Caco-2 (cell line): ENCODE measurements at regions of chr9 and their contacts with region 1.

Region 1: DNA sequence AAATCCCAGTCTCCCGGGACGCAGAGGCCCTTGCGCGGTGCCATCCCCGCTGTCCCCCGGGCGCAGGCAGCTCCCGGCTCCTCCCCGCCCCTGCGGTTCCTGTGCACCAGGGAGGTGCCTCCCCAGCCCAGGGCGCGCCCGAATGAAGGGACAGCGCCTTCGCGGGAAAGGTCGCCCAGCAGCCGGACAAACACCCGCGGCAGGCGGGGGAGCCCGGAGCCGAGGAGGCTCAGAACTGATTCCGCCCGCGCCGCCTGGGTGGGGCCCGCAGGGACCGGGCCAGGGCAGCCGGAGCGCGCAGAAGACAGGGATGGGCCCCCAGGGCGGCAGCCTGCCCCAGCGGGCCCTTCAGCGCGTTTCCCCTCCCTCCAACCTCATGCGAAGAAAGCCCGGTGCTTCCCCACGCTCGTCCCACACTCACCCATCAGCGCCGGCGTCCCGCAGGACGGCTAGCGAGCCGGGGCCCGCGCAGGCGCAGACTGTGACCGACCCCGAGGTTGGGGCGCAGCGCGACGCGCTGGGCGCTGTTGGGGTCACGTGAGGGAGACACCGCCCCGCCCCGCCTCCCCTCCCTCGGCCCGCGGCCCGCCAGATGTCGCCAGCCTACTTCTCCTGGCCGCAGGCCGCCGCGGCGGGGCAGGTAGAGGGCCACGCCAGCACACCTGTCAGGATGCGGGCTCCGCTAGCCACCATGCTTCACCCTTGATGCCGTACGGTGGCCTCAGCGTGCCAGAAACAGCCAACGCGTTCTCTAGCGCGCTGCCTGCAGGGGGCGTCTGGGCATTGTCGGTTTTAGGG is at the start of gene SLC25A51:
- DNase-seq: peak; percentile 97
- H3K4me3 ChIP-seq: peak within 1 kb of the TSS; percentile 81
- H3K4me3 Mint-ChIP-seq: peak within 1 kb of the TSS; percentile 77
- H3K27ac Mint-ChIP-seq: peak within 1 kb of the TSS; percentile 91
- H3K4me1 ChIP-seq: peaks cover 26% of the 10 kb centered on the region
- H3K4me1 Mint-ChIP-seq: peaks cover 20% of the 10 kb centered on the region
- H3K27me3 ChIP-seq: no peaks in the 10 kb centered on the region
- H3K27me3 Mint-ChIP-seq: no peaks in the 10 kb centered on the region
- CTCF ChIP-seq: peak; percentile 88 to 96
- total RNA-seq, gene SLC25A51: 29.1 and 29.3 TPM in 2 replicates

Region 2: DNA sequence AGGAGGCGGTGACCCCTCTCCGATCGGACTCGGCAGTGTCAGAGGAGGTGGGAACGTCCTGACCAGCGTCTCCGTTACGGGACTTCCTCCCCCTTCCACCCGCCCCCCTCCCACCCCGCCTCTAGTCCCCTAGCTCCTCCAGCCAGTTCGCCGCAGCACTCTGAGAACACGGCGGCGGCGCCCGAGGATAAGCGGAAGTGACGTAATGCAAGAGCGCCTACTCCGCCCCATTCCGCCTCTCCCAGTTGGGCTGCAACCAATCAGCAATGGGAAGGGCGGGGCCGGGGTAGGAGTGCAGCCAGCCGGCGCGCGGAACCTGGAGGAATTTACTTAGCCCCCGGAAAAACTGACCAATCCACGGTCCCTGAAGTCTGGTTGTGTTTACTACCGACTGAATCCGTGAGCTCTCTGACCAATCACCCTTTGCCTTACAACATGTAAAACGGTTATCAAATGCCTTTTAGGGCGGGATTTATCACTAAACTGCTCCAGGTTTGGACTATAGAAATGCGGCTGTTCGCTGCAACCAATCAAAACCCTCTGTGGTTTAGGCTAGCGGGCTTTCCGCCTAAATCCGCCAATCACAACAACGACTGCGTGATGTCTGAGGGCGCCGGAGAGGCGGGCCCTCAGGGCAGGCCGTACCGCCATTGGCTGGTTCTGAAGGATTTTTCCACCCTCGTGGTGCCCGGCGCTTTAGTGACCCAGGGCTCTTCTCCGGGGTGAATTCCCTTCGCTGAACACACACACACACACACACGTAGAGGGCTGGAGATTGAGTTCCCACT is 438.4 kb before region 1 on chr9 and contains the start of gene ZBTB5:
- CTCF ChIA-PET with region 1: no interaction called
- POLR2A ChIA-PET with region 1: interaction called, 10 read pairs
- intact Hi-C with region 1: loop called (anchors 5 kb)
- DNase-seq: peak; percentile 99
- H3K4me3 ChIP-seq: peak within 1 kb of the TSS; percentile 89
- H3K4me3 Mint-ChIP-seq: peak within 1 kb of the TSS; percentile 95
- H3K27ac Mint-ChIP-seq: peak within 1 kb of the TSS; percentile 96
- H3K4me1 ChIP-seq: peaks cover 12% of the 10 kb centered on the region
- H3K4me1 Mint-ChIP-seq: peaks cover 21% of the 10 kb centered on the region
- H3K27me3 ChIP-seq: no peaks in the 10 kb centered on the region
- H3K27me3 Mint-ChIP-seq: no peaks in the 10 kb centered on the region
- CTCF ChIP-seq: no peak
- total RNA-seq, gene ZBTB5: 12.5 and 13.2 TPM in 2 replicates

Region 3: DNA sequence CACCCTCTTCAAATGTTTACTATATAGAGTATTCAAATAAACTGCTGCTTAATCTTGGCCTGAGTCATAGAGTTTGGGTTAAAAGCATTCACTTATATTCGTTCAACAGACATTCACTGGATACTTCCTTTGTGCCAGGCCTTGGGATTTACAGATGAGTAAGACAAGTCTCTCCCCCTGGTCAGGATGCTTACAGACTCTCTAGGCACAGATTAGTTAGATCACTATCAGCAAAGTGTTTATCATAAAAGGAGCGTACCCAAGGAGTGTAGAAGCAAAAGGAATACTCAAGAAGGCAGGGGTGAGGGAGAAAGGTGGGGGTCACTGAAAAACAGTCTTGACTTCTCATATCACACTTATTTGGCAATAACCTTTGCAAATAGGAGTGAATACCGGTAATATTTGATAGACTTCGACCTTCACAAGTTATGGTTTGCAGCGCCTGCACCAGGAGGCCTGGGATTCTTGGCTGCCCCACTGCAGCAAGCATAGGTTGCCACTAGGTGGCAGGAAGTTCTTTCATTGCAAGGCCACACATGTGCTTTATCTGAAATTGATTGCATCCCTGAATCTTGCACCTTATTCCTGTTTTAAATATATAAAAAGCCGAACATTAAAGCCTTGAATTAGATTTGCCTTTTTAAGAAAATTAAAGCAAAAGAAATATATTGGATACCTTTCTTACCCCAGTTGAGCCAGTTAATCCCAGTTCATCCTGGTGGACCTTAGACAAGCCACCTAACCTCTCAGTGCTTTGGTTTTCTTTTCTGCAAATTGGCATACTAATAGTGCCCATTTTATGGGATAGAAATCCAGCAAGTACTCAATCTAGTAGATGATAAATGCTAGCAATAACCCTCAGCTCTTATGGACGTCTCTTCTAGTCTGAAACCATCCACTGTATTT is 156.7 kb before region 1 on chr9:
- CTCF ChIA-PET with region 1: no interaction called
- POLR2A ChIA-PET with region 1: no interaction called
- intact Hi-C with region 1: loop called (anchors 10 kb)
- DNase-seq: peak; percentile 61 to 73
- H3K4me3 ChIP-seq: no peak overlapping the region
- H3K4me3 Mint-ChIP-seq: no peak overlapping the region
- H3K27ac Mint-ChIP-seq: no peak overlapping the region
- H3K4me1 ChIP-seq: no peaks in the 10 kb centered on the region
- H3K4me1 Mint-ChIP-seq: no peaks in the 10 kb centered on the region
- H3K27me3 ChIP-seq: no peaks in the 10 kb centered on the region
- H3K27me3 Mint-ChIP-seq: no peaks in the 10 kb centered on the region
- CTCF ChIP-seq: peak; percentile 85 to 90

Region 4: DNA sequence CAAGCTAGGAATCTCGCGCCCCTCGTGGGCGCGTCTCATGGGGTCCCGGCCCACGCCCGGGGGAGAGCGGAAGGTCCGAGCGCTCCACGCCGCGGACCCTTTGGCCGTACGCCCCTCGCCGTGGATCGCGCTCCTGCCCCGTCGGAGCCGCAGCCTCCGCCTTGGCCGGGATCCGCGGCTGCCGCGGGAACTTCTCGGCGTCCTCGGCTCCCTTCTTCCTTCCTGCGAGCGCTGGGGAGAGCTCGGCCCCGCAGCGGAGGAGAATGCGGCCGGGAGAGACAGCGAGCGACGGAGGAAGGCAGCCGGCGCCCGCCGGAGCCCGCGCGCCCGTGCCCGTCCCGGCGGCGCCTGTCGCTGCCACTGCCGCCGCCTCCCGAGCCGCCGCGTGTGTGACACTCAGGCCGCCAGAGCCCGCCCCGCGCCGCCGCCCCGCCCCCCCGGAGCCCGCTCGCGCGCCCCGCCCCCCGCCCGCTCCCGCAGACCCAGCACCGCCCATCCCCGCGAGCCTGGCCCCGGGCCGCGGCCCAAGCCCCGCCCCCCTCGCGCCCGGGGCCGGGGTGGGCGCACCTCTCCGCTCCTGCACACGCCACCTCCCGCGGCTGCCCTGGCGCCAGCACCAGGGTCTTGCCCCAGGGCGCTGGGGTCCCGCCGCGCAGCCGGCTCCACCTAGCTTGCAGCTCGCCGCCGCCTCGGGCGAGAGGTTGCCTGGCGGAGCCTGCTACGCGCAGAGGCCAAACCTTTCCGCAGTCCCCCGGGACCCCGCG is 165.2 kb after region 1 on chr9 and contains the start of gene SHB:
- CTCF ChIA-PET with region 1: no interaction called
- POLR2A ChIA-PET with region 1: no interaction called
- intact Hi-C with region 1: loop called (anchors 2 kb)
- DNase-seq: peak; percentile 81 to 84
- H3K4me3 ChIP-seq: peak within 1 kb of the TSS; percentile 92
- H3K4me3 Mint-ChIP-seq: peak within 1 kb of the TSS; percentile 95
- H3K27ac Mint-ChIP-seq: peak within 1 kb of the TSS; percentile 83
- H3K4me1 ChIP-seq: peaks cover 32% of the 10 kb centered on the region
- H3K4me1 Mint-ChIP-seq: peaks cover 24% of the 10 kb centered on the region
- H3K27me3 ChIP-seq: no peaks in the 10 kb centered on the region
- H3K27me3 Mint-ChIP-seq: no peaks in the 10 kb centered on the region
- CTCF ChIP-seq: no peak
- total RNA-seq, gene SHB: 18.3 and 18.4 TPM in 2 replicates

Region 5: DNA sequence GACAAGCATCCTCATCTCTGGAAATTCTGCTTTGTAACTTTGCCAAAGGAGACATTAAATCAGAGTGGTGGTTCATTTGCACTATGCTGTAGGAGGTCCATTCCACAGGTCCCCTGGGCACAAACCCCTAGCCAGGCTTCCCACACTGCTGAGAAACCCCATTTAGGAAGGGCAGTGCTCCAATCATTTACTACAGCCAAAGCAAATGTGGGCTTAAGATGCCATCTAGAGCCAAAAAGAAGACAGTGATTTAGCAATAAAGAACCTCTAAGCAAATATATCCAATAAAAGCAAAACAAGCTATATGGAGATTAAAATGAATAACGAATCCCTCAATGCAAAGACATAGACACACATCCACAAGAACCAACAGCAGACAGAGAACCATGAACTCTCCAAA is 359.7 kb after region 1 on chr9:
- CTCF ChIA-PET with region 1: no interaction called
- POLR2A ChIA-PET with region 1: no interaction called
- intact Hi-C with region 1: loop called (anchors 2 kb)
- DNase-seq: peak in 1 of 2 experiments; percentile 35
- H3K4me3 ChIP-seq: no peak overlapping the region
- H3K4me3 Mint-ChIP-seq: no peak overlapping the region
- H3K27ac Mint-ChIP-seq: no peak overlapping the region
- H3K4me1 ChIP-seq: no peaks in the 10 kb centered on the region
- H3K4me1 Mint-ChIP-seq: no peaks in the 10 kb centered on the region
- H3K27me3 ChIP-seq: no peaks in the 10 kb centered on the region
- H3K27me3 Mint-ChIP-seq: no peaks in the 10 kb centered on the region
- CTCF ChIP-seq: peak; percentile 27 to 50

Region 6: DNA sequence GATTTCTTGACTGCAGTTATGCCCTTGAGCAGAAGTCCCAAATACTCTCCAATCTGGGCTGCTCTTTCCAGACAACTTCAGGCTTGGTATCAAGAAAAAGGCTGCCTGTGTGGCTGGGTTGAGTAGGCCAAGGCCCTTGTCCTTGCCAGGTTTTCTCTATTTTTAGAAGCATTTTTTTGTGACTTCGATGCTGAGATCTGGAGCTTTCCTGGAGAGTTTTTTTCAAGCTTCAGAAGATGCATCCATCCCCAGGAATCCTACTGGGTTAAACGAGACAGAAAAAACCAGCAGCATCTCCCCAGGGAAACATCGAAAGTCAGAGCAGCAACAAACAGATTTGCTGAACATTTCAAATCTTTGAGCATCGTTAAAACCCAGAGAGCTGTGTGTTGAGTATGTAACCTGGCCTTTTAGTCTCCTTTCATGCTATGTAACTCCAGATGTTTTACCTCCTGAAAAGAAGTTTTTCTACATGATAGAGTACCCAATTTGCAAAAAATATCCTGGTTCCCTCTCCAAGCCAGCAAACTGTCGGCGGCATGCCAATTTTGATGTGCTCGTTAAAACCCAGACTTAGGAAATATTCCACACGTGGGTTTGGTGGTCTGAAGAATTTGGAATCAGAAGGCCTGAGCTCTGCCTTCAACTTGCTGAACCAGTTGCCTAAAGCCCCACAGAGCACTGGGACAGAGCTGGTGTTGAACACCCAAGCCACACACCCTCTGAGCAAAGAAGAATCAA is 390.5 kb after region 1 on chr9:
- CTCF ChIA-PET with region 1: no interaction called
- POLR2A ChIA-PET with region 1: no interaction called
- intact Hi-C with region 1: no loop called
- DNase-seq: no peak
- H3K4me3 ChIP-seq: no peak overlapping the region
- H3K4me3 Mint-ChIP-seq: no peak overlapping the region
- H3K27ac Mint-ChIP-seq: no peak overlapping the region
- H3K4me1 ChIP-seq: no peaks in the 10 kb centered on the region
- H3K4me1 Mint-ChIP-seq: no peaks in the 10 kb centered on the region
- H3K27me3 ChIP-seq: no peaks in the 10 kb centered on the region
- H3K27me3 Mint-ChIP-seq: peaks cover 7% of the 10 kb centered on the region
- CTCF ChIP-seq: no peak